Sigmoid colon (tissue), 7 donors: ENCODE measurements at regions of chr2 and their contacts with region 1.

Region 1: GRCh38 chr2:221792971-221793521 is 220.9 kb upstream of the EPHA4 start:
- DNase-seq: no peak
- H3K4me3 ChIP-seq: no peak overlapping the region
- H3K27ac ChIP-seq: no peak overlapping the region
- H3K4me1 ChIP-seq: no peaks in the 10 kb centered on the region
- H3K27me3 ChIP-seq: no peaks in the 10 kb centered on the region
- CTCF ChIP-seq: no peak
- EP300 ChIP-seq: no peak
- POLR2A ChIP-seq: no peak

Region 2: DNA sequence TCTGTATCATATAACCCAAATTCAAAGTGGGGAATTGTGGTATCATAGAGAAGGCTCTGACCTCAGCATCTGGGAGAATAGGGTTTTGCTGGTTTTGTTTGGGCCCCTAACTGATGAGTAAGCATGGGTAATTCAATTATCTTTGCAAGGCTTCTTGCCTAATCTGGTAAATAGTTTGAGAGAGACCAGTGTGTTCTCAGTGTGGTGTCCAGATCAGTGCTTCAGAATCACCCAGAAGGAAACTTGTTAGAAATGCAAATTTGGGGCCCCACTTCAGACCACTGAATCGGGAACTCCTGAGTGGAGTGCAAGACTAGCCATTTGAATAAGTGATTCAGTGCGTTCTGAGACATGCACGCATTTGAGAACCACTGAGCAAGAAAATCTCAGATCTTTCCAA is 503.7 kb before region 1 on chr2:
- intact Hi-C with region 1: no loop called
- DNase-seq: no peak
- H3K4me3 ChIP-seq: no peak overlapping the region
- H3K27ac ChIP-seq: no peak overlapping the region
- H3K4me1 ChIP-seq: no peaks in the 10 kb centered on the region
- H3K27me3 ChIP-seq: no peaks in the 10 kb centered on the region
- CTCF ChIP-seq: no peak
- EP300 ChIP-seq: no peak
- POLR2A ChIP-seq: no peak

Region 3: GRCh38 chr2:221836095-221836494 is 43.0 kb after region 1 on chr2:
- intact Hi-C with region 1: loop called (anchors 5 kb)
- DNase-seq: no peak
- H3K4me3 ChIP-seq: no peak overlapping the region
- H3K27ac ChIP-seq: peak overlapping the region in 1 of 4 donors; percentile 24
- H3K4me1 ChIP-seq: peaks cover 0 to 27% (median 15%) of the 10 kb centered on the region in 4 donors
- H3K27me3 ChIP-seq: no peaks in the 10 kb centered on the region
- CTCF ChIP-seq: no peak
- EP300 ChIP-seq: no peak
- POLR2A ChIP-seq: no peak